ENCODE measurements at regions of chr15 and their contacts with region 1.

Region 1: DNA sequence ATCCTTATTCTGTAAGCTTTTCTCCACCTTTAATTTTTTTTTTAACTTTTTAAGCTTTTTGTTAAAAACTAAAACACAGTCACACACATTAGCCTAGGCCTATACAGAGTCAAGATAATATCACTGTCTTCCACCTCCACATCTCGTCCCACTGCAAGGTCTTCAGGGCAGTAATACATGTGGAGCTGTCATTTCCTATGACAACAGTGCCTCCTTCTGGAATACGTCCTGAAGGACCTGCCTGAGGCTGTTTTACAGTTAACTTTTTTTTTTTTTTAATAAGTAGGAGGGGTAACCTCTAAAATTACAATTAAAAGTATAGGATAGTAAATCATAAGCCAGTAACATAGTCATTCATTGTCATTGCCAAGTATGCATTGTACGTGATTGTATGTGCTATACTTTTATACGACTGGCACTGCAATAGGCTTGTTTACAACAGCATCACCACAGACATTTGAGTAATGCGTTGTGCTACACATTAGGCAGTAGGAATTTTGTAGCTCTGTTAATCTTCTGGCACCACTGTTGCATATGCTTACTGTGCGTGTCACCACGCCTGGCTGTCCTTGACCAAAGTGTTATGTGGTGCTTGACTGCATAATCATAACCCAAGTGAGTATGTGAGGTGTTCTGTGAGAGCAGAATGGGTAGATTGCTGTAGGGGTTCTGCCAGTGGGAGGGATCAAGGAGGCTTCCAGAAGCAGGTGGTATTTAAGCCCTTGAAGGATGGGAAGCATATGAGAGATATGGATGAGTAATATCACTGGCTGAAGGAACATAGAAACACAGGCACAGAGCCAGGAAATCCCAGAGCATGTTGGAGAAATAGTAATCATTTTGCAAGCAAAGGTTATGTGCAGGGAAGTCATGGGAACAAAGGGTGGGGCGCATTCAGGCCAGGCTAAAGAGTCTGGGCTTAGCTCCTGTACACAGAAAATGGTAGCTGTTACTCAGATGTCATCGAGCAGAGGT is 18.3 kb downstream of the FBXO22 start:
- DNase-seq: peak; percentile 43
- H3K4me3 Mint-ChIP-seq: no peak overlapping the region
- H3K27ac Mint-ChIP-seq: no peak overlapping the region
- H3K4me1 Mint-ChIP-seq: peaks cover 21% of the 10 kb centered on the region
- H3K27me3 Mint-ChIP-seq: no peaks in the 10 kb centered on the region

Region 2: DNA sequence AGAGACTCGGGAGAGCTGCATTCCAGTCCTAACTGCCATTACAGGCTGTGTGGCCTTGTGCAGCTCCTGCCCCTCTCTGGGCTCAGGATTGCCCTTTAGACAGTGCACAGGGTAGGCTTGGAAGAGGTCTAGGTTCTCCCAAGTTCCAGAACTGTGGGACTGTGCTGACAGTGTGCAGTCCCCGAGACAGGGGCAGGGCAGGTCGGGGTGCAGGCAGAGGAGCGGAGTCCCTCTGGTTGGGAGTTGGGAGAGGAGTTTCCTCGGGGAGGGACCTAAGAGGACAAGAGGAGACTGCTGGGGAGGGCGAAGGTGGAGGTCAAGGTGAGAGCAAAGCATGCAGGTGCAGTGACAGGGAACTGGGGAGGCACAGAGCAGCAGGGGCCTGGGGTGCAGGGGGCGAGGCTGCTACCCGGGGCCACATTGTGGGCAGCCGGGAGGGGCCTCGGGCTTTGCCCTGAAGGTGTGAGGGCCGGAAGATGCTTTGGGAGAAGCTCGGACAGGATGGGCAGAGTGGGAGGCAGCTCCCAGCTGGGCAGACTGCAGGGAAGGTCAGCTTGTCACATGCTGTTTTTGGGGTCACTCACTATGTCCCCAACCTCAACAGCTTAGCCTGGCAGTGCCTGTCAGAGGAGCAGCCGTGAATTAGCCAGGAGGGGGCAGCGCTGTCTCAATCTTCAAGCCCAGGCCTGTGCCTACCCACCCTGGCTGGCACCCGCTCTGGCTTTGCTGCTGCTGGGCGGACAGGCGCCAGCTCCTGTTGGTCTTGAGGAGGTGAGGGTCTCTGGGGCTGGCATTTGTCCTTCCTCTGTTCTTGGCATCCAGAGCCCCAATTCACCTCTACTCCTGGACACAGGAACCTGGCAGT is 193.9 kb before region 1 on chr15:
- CTCF ChIA-PET with region 1: interaction called, 10 read pairs
- DNase-seq: peak; percentile 82
- H3K4me3 Mint-ChIP-seq: no peak overlapping the region
- H3K27ac Mint-ChIP-seq: no peak overlapping the region
- H3K4me1 Mint-ChIP-seq: peaks cover 18% of the 10 kb centered on the region
- H3K27me3 Mint-ChIP-seq: peaks cover 73% of the 10 kb centered on the region

Region 3: DNA sequence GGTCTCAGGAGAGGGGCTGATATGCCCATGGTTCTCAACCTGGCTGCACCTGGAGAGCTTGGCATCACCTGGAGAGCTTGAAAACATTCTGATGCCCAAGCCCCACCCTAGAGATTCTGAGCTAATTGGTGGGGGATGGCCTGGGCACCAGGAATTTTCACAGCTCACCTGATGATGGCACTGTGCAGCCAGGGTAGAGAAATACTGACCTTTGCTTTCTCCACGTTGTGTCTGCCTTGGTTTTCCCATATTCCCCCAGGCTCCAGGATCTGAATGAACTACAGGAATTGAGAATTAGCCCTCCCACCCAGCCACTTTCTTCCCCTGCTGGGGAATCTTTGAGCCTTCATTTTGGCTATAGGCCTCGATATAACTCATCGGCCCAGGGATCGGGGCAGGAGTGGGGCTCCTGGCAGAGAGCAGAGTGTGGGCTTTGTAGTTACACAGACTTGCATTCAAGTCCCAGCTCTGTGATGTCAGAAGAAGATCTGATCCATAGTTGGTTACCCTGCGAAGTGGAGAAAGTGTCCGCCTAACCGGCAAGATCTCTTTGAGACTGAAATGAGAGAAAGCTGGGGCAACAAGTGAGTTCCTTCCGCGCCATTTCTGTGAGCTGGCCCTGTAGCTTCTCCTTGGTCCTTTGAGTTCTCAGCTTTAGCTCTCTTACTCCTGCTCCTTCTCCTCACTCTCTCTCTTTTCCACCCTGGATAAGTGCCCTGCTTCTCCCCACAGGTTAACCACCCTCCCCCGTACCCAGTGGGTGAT is 111.8 kb before region 1 on chr15:
- CTCF ChIA-PET with region 1: interaction called, 35 read pairs
- DNase-seq: peak; percentile 39
- H3K4me3 Mint-ChIP-seq: no peak overlapping the region
- H3K27ac Mint-ChIP-seq: no peak overlapping the region
- H3K4me1 Mint-ChIP-seq: no peaks in the 10 kb centered on the region
- H3K27me3 Mint-ChIP-seq: peaks cover 48% of the 10 kb centered on the region